ENCODE measurements at regions of chr15 and their contacts with region 1.

Region 1: DNA sequence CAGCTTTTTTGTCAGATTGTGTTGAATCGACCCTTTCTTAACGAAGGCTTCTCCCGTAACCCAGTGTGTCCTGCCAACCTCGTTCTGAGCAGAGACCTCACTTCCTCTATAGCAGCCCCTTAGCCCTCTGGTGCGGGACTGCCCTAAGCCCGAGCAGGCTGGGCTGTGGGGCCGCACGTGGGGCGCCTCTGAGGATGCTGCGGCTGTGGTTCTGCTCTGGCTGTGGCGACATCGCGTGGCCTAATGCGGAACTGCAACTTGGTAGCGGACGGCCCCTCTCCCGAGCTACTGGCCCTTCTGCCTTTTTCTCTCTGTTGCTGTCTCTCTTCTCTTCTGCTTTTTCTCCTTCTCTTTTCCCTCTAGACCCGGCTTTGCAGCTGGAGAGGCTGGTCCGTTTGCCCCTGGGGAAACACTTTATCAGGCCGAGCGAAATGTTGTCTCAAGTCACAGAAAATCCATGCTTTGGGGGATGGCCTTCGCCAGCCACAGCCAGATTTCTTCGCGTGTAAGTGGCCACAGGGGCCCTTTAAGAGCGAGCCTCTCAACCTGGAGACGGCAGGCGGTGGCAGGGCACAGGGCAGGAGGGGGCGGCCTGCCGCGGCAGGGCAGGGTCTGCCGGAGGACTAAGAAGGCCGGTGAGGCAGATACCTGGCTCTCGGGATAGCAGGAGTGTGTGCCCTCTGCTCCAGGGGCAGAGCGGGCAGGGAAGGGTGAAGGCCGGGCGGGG is 19.4 kb upstream of the KIF23 start:
- DNase-seq: peak; percentile 16
- ATAC-seq: peak; percentile 96
- H3K4me3 ChIP-seq: no peak overlapping the region
- H3K27ac ChIP-seq: no peak overlapping the region
- H3K4me1 ChIP-seq: peaks cover 18 to 39% of the 10 kb centered on the region in 2 experiments
- H3K27me3 ChIP-seq: no peaks in the 10 kb centered on the region
- CTCF ChIP-seq: peak; percentile 75 to 93 (median 91)
- POLR2A ChIP-seq: no peak
- RAD21 ChIP-seq: peak; percentile 91

Region 2: DNA sequence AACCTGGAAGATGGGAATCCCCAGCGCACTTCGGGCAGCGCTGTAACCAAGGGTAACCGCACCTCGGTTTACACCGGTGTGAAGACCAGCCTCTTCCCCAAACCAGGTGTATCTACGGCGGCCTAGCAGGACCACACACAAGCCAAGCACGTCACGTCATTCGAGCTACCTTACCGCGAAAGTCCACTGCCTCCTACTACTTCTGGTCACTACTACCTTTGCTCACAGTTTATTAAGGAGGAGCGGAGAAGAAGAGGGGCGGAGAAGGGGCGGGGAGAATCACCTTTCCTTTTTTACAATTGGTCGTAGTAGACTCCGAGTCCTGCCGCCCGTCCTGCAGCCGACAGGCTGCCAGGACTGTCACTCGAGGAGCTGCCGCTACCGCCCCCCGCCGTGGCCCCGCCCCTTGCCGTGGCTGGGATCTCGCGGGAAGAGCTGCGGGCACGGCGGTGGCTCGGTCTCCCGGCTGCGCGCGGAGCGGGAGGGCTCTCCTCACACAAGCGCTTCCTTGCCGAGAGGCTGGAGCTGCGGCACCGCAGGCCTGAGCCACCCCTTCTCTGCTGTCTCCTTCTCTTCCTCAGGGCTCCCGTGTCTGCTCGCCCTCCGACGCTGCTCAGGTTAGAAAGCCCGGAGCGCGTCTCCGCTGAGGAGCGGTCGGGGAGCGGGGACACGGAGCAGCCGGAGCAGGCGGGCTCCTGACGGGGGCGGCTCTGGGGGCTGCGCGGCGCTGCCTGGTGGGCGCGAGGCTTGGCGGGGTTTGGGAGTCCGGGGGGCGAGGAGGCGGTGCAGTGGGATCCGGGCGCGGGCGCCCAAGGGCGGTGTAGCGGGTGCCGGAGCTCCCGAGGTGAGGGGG is 234.4 kb before region 1 on chr15 and contains the start of gene GLCE:
- CTCF ChIA-PET with region 1: no interaction called
- POLR2A ChIA-PET with region 1: no interaction called
- RAD21 ChIA-PET with region 1: no interaction called
- intact Hi-C with region 1: loop called (anchors 5 kb)
- DNase-seq: peak; percentile 96
- ATAC-seq: peak; percentile 93
- H3K4me3 ChIP-seq: peak within 1 kb of the TSS; percentile 53 to 83
- H3K27ac ChIP-seq: peak within 1 kb of the TSS; percentile 73
- H3K4me1 ChIP-seq: peaks cover 3 to 16% of the 10 kb centered on the region in 2 experiments; a peak in 3 of 4 replicates
- H3K27me3 ChIP-seq: no peaks in the 10 kb centered on the region
- CTCF ChIP-seq: no peak
- POLR2A ChIP-seq: peak; percentile 92
- RAD21 ChIP-seq: no peak
- total RNA-seq, gene GLCE: 22.2 TPM

Region 3: DNA sequence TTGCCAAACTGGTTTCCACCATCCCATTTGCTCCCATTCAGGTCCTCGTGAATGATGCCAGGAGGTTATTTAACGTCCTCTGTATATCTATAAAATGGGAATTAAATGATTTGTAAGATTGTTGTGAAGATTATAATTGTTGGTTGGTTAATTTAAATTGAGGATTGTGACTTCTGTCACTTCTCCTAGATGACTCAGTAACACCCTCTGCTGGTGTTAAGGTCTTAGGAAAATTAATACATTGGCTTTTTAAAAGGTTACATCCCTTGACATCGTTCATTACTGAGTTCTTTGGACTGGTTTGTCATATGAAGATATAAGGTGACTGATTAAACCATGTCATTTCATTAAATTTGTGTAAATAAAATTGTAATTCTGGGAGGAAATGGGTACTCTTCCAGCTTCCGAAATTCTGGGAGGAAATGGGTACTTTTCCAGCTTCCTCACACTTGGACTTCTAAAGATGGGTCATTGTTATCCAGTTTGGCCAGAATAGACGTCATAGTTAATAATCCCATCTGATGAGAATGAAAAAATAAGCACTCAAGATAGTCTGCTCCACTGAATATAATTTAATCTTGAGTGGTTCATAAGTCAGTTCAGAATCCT is 129.3 kb before region 1 on chr15:
- CTCF ChIA-PET with region 1: interaction called, 7 read pairs
- POLR2A ChIA-PET with region 1: no interaction called
- RAD21 ChIA-PET with region 1: no interaction called
- intact Hi-C with region 1: loop called (anchors 5 kb)
- DNase-seq: peak; percentile 34
- ATAC-seq: peak; percentile 61
- H3K4me3 ChIP-seq: no peak overlapping the region
- H3K27ac ChIP-seq: no peak overlapping the region
- H3K4me1 ChIP-seq: no peaks in the 10 kb centered on the region
- H3K27me3 ChIP-seq: no peaks in the 10 kb centered on the region
- CTCF ChIP-seq: peak; percentile 49 to 73 (median 57); a peak in 5 of 6 replicates
- POLR2A ChIP-seq: no peak
- RAD21 ChIP-seq: peak; percentile 73

Region 4: DNA sequence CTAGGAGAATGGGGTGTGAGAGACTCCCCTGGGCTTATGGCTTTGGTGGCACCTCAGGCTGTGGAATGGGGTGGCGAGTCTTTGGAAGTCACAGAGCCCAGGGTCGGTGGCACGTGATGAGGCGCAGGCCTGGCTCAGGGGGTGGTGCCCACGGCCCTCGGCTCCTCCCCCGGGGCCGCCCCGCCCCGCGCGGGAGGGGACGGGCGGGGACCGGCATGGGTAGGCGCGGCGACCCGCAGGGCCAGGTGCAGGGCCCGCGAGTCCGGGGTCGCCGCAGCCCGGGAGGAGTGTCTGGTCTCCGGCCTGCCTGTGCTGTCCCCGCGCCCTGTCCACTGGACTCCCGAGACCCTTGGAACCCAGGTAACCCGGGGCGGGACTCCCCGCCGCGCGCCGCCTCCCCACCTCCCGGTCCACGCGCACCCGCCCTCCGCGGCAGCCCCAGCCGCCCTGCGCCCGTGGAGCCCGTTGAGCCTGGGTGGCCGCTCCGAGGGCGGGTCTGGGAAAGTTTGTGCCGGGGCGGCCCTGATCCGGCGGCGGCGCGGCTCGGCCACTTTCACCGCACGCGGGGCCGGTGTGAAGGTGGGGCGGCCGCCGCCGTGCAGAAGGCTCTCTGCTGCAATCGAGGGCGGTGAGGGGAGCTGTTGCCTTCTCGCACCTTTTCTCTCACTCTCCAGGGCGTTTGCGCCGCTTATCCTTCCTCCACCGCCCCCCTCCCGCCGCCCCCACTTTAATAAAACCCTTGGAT is 95.8 kb before region 1 on chr15 and contains the start of gene PAQR5:
- CTCF ChIA-PET with region 1: interaction called, 3 read pairs
- POLR2A ChIA-PET with region 1: no interaction called
- RAD21 ChIA-PET with region 1: no interaction called
- intact Hi-C with region 1: loop called (anchors 5 kb)
- DNase-seq: no peak
- ATAC-seq: peak; percentile 95
- H3K4me3 ChIP-seq: peak within 1 kb of the TSS; percentile 52 to 72
- H3K27ac ChIP-seq: peak within 1 kb of the TSS; percentile 50; the same call in 1 of the 2 replicates
- H3K4me1 ChIP-seq: peaks cover 20 to 40% of the 10 kb centered on the region in 2 experiments; a peak in 3 of 4 replicates
- H3K27me3 ChIP-seq: no peaks in the 10 kb centered on the region
- CTCF ChIP-seq: no peak
- POLR2A ChIP-seq: no peak
- RAD21 ChIP-seq: no peak
- total RNA-seq, gene PAQR5: 34.0 TPM

Region 5: DNA sequence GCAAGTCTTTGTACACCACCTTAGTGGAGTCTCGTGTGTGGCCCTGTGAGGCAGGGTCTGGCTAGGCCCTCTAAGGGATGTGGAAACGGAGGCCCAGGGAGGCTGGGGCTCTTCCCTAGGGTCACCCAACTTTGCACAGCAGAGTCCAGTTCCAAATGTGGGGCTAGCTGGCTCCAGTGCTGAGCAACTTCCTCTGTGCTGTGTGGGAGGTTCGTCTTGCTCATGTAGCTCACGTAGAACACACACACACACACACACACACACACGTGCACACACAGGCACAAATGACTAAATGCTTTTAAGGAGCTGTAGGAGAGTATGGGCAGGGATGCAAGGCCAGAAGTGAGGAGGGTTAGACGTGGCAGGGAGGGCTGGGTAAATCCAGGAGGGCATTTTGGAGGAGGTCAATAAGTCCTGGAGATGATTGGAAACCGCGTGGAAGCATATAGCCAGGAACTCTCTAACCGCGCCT is 271.7 kb after region 1 on chr15:
- CTCF ChIA-PET with region 1: no interaction called
- POLR2A ChIA-PET with region 1: no interaction called
- RAD21 ChIA-PET with region 1: no interaction called
- intact Hi-C with region 1: no loop called
- DNase-seq: no peak
- ATAC-seq: no peak
- H3K4me3 ChIP-seq: no peak overlapping the region
- H3K27ac ChIP-seq: no peak overlapping the region
- H3K4me1 ChIP-seq: no peaks in the 10 kb centered on the region
- H3K27me3 ChIP-seq: peaks cover 2% of the 10 kb centered on the region; the same call in 1 of the 2 replicates
- CTCF ChIP-seq: no peak
- POLR2A ChIP-seq: no peak
- RAD21 ChIP-seq: no peak